ENCODE measurements at regions of chr4 and their contacts with region 1.

Region 1: DNA sequence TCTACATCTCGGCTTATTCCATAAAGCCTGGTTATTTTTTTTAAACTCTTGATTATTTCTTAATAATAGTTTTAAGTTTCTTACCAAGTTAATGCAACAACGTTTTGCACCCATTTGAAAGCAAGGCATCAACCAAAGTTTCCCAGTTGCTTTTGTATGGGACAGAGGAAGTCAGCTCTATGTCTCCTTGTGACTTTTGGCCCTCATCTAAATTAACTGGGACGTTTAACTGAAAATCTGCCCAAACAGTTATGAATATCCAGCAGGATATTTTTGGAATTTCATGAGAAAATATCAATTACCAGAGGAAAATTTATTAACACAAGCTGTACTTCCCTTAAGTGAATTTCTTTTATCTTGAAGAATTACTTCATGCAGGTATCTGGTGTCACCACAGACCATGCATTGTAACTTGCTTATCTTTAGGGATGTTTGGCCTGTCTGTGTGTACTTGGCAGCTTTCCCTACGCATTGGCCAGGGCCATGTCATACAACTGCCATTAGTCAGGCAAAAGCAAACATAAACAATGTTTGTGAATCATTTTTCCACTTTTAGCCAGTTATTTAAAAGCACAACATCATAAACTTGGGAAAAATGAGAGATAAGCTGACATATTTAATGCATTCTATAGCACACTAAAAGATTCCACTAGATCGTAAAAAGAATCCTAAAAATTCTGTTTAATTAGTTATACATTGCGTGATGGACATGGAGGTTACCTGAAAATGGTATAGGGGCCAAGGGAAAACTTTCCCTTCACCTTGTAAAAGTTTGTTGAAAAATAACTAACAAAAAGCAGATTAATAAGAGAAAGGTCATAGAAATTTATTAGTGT is 101.4 kb upstream of the PDE5A start:
- DNase-seq: peak in 4 of 5 donors; percentile 36 to 66 (median 49)
- ATAC-seq: peak; percentile 74 to 85 (median 80)
- H3K4me3 ChIP-seq: no peak overlapping the region
- H3K27ac ChIP-seq: peak overlapping the region in 9 of 12 donors; percentile 31 to 73 (median 60)
- H3K4me1 ChIP-seq: peaks cover 0 to 63% (median 27%) of the 10 kb centered on the region in 12 donors
- H3K27me3 ChIP-seq: no peaks in the 10 kb centered on the region
- CTCF ChIP-seq: no peak
- POLR2A ChIP-seq: no peak

Region 2: GRCh38 chr4:119939071-119939995 is 209.3 kb after region 1 on chr4:
- intact Hi-C with region 1: loop called in 1 of 10 experiments (anchors 5 kb)
- DNase-seq: peak in 4 of 5 donors; percentile 23 to 45 (median 36)
- ATAC-seq: peak; percentile 90 to 94 (median 92)
- H3K4me3 ChIP-seq: peak overlapping the region; percentile 9 to 55 (median 46)
- H3K27ac ChIP-seq: peak overlapping the region; percentile 65 to 92 (median 80)
- H3K4me1 ChIP-seq: peaks cover 0 to 19% (median 7%) of the 10 kb centered on the region in 12 donors
- H3K27me3 ChIP-seq: no peaks in the 10 kb centered on the region
- CTCF ChIP-seq: no peak
- POLR2A ChIP-seq: no peak

Region 3: GRCh38 chr4:119977076-119977940 is 247.3 kb after region 1 on chr4:
- intact Hi-C with region 1: loop called in 1 of 10 experiments (anchors 10 kb)
- DNase-seq: no peak
- ATAC-seq: no peak
- H3K4me3 ChIP-seq: no peak overlapping the region
- H3K27ac ChIP-seq: peak overlapping the region in 1 of 12 donors; percentile 77
- H3K4me1 ChIP-seq: peaks cover 0 to 3% (median 0%) of the 10 kb centered on the region in 12 donors
- H3K27me3 ChIP-seq: no peaks in the 10 kb centered on the region
- CTCF ChIP-seq: no peak
- POLR2A ChIP-seq: no peak